Left ventricle myocardium inferior (tissue), 1 donor: ENCODE measurements at regions of chr9 and their contacts with region 1.

Region 1: DNA sequence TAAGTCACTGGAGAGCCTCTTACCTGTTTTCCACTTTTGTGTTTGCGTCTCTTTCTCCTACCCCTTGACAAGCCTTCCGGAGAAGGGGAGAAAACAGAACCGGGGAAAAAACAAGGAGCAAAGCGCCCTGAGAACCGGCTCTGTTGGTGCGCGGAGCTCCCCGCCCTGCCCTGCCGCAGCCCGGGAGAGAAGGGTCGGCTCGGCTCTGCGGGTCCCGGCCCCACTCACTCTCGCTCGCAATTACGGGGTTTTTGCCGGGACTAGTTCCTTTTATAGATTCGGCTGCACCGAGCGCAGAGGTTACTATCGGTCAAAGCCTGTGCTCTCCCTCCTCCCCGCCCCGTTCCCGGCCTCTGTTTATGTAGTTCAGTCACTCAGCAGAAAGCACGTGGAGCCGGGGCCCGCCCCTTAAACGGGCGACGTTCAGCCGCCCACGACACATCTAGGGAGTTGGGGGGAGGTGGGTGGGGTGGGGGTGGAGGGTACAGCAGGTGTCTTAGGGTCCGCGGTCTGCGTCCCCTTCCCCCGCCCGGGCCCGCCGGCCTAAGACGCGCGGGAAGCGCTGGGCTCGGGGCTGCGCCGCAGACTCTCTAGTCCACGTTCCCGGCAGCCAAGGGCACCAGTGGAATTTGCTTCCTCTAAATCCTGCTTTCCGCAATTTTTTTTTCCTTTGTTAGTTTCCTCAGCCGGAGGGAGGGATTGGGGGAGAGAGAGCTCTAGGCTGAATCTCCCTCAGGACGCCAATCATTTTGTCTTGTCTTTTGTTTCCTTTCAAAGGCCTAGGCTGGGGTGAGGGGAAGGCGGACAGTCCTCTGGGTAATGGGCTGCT is at the start of gene ABCA1:
- DNase-seq: peak; percentile 94
- H3K4me3 ChIP-seq: peak within 1 kb of the TSS; percentile 97
- H3K27ac ChIP-seq: peak within 1 kb of the TSS; percentile 91
- H3K4me1 ChIP-seq: peaks cover 56% of the 10 kb centered on the region
- H3K27me3 ChIP-seq: no peaks in the 10 kb centered on the region
- CTCF ChIP-seq: no peak
- total RNA-seq, gene ABCA1: 10.8 TPM

Region 2: GRCh38 chr9:104863180-104863883 is 64.8 kb before region 1 on chr9:
- intact Hi-C with region 1: loop called (anchors 10 kb)
- DNase-seq: no peak
- H3K4me3 ChIP-seq: no peak overlapping the region
- H3K27ac ChIP-seq: no peak overlapping the region
- H3K4me1 ChIP-seq: peaks cover 46% of the 10 kb centered on the region
- H3K27me3 ChIP-seq: no peaks in the 10 kb centered on the region
- CTCF ChIP-seq: peak; percentile 85

Region 3: DNA sequence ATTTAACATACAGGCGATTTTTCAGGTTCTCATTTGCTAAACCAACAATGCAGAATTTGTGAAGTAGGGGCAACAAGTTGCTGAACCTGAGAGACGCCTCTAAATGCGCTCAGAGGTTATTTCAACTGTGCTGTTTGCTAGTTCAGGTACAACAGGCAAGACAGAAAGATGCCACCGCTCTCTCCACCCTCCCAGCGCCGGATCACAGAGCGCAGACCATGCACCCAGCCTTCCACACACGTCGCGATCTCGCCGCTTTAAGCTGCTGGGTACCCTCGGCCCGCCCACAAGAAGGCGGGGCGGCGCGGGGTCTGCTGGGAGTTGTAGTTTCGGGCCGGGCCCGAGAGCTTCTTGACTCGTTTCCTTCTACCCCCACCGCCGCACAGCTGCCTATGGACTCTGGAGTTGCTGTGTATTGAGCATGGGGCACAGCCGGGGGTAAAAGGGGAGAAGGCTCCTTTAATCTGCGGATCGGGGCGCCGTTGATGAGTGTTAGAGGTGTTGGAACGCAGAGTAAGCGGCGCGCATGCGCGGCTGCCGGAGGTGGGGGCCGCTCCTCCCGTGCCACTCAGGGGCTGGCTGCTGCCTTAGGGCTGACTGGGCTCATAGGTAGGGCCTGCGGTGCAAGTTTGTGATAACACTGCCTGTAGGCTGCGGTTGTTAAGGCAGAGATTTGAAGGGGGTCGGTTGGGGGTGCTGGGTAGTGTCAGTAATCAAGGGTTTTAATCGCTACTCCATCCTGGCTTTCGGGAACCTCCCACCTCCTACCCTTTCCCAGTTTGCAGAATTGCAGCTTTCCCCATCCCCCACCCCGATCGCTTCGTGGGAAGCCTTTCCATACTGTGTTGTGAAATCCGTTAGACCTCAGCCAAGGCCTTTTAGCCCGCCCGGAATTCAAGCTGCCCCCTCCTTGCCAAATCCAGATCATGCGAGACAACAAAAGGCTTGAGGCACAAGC is 40.2 kb after region 1 on chr9:
- intact Hi-C with region 1: loop called (anchors 2 kb)
- DNase-seq: peak; percentile 91
- H3K4me3 ChIP-seq: peak overlapping the region; percentile 85
- H3K27ac ChIP-seq: peak overlapping the region; percentile 97
- H3K4me1 ChIP-seq: peaks cover 25% of the 10 kb centered on the region
- H3K27me3 ChIP-seq: no peaks in the 10 kb centered on the region
- CTCF ChIP-seq: no peak

Region 4: DNA sequence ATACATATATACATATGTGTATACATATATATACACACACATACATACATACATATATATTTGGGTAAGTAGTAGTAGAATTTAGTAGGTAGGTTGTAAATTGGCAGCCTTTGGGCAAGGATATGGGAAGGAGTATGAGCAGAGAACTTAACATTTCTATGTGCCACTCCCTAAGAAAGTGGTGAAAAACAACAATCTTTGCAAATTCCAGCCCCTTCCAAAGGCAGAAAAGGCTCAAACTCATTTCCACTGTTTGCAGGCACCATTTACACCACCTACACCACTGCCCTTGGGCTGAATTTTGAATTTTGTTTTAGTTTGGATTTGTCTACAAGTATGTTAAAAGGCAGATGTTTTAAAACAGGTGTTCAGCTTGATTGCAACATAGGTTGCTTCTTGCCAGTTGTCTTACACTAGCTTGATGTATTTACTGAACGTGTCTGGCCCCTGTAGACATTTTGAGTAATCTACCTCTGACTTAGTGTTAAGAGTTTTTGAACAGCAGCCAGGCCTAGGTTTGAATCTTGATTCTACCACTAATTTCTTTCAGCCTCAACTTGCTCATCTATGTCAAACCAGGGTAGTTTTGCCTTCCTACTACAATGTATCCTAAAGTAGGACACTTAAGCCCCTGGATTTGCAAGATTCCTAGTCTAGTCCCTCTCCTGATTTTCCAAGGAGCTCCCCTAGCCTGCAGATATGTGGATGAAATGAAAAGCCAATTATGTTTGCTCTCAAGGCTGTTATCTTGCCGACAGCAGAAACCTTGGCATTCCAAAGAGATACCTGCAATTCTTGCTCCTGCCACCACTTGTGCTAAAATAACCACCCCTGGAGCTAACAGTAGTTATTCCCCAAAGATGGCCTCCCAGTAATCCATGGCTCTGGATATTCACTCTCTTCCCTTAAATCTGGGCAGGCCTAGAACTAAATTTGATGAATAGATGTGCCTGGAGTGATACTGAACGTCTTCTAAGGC is 160.1 kb after region 1 on chr9:
- intact Hi-C with region 1: no loop called
- DNase-seq: no peak
- H3K4me3 ChIP-seq: no peak overlapping the region
- H3K27ac ChIP-seq: no peak overlapping the region
- H3K4me1 ChIP-seq: no peaks in the 10 kb centered on the region
- H3K27me3 ChIP-seq: no peaks in the 10 kb centered on the region
- CTCF ChIP-seq: no peak

Region 5: DNA sequence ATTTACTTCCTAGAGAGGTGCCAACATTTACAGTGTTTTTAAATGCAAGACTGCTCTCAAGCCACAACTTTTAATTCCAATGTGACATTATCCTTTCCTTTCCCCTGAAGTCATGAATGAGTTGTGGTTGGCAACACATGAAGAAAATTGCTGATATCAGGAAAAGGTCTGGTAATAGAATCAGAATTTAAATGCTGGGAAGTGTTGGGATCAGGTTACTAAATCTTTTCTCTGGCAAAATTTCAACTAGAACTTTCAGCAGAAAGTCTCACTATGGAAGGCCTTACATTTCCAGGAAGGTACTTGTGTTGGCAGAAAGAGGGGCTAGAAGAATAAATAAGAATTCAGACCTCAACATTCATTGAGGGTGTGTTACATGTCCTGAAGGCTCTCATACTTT is 305.7 kb after region 1 on chr9:
- intact Hi-C with region 1: no loop called
- DNase-seq: no peak
- H3K4me3 ChIP-seq: no peak overlapping the region
- H3K27ac ChIP-seq: no peak overlapping the region
- H3K4me1 ChIP-seq: no peaks in the 10 kb centered on the region
- H3K27me3 ChIP-seq: no peaks in the 10 kb centered on the region
- CTCF ChIP-seq: no peak